GM10248 (cell line): ENCODE measurements at regions of chr18 and their contacts with region 1.

Region 1: DNA sequence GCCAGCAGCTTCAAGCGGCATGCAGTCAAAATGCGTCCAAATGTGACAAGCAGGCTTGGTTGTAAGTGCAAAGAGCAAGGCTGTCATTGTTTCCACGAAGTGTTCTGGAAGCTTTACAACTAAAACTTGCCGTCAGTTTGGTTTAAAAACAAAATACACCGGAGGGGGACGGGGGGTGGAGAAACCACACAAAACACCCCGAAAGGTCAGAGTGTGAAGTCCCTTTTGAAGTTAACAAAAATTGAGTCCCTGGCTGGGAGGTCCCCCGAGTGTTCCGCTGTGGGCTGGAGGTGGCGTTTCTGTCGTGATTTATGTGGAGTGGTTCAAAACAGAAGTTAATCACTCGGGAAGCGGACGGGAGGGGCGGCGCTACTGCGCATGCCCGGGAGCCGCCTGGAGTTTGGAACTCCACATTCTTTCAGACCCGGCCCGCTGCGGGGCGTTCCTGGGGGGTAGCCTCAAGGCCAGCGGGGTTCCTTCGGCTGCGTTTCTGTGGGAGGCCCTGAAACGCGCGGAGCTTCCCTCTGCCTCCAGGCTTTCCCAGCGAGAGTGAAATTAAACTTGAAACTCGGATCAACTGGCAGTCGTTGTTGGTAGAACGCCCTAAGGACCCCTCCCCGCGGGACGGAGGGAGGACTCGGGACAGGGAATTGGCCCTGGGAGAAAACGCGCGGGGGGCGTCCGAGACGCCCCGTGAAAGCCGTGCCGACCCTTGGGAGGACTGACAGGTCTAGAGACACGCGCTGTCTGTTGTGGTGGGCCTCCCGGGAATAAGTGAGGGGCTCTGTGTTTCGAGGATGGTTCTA is 1.4 kb downstream of the TGIF1 start:
- DNase-seq: peak; percentile 60
- CTCF ChIP-seq: no peak

Region 2: GRCh38 chr18:3297025-3297984 is 154.1 kb before region 1 on chr18:
- CTCF ChIA-PET with region 1: interaction called, 23 read pairs
- POLR2A ChIA-PET with region 1: no interaction called
- DNase-seq: peak; percentile 81
- CTCF ChIP-seq: peak; percentile 88

Region 3: GRCh38 chr18:3397071-3397745 is 54.2 kb before region 1 on chr18:
- CTCF ChIA-PET with region 1: interaction called, 10 read pairs
- POLR2A ChIA-PET with region 1: no interaction called
- DNase-seq: no peak
- CTCF ChIP-seq: no peak

Region 4: GRCh38 chr18:3466045-3466444 is 14.7 kb after region 1 on chr18:
- CTCF ChIA-PET with region 1: interaction called, 16 read pairs
- POLR2A ChIA-PET with region 1: interaction called, 3 read pairs
- DNase-seq: no peak
- CTCF ChIP-seq: no peak

Region 5: GRCh38 chr18:3472681-3473544 is 21.5 kb after region 1 on chr18:
- CTCF ChIA-PET with region 1: interaction called, 12 read pairs
- POLR2A ChIA-PET with region 1: no interaction called
- DNase-seq: peak; percentile 22
- CTCF ChIP-seq: no peak

Region 6: GRCh38 chr18:3585656-3586509 is 134.5 kb after region 1 on chr18:
- CTCF ChIA-PET with region 1: interaction called, 12 read pairs
- POLR2A ChIA-PET with region 1: no interaction called
- DNase-seq: peak; percentile 61
- CTCF ChIP-seq: peak; percentile 81

Region 7: DNA sequence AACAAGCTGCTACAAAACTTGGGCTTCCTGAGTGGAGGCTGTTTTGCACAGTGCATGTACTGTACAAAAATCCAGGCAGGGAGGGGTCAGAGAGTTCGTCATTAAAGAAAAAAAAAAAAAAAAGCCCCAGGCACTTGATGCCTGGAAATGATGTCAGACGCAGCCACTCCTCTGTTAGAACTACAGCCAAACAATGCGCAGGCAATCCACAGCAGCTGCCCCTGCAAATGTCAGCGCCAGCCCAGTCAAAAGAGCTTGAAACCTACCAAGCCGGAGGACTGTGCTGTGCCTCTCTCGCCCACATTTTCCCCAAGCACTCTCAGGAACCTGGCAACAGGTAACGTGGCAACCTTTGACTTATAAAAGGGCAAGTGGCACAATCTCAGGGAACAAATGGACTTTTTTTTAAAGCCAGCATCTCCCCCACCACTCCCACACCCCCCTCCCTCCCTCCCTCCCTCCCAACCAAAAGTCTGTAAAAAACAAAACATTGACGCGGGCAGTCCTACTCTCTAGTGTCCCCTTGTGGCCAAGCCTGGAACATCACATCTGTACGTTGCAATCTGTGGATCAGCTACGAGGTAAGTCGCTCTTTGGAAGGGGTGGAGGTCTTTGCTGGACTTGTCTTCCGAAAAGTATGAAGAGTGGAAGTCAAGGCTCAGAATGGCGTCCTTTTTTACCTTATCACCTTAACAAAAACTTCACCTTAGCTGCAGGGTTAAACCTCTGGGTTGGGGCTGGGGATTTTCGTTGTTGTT is 142.7 kb after region 1 on chr18:
- CTCF ChIA-PET with region 1: interaction called, 16 read pairs
- POLR2A ChIA-PET with region 1: no interaction called
- DNase-seq: peak; percentile 75
- CTCF ChIP-seq: peak; percentile 95